ENCODE measurements at regions of chr12 and their contacts with region 1.

Region 1: GRCh38 chr12:132761032-132761920 is at the start of gene ANKLE2:
- DNase-seq: peak; percentile 86
- H3K4me3 Mint-ChIP-seq: peak within 1 kb of the TSS; percentile 88
- H3K27ac Mint-ChIP-seq: peak within 1 kb of the TSS; percentile 97
- H3K4me1 Mint-ChIP-seq: peaks cover 26% of the 10 kb centered on the region
- H3K27me3 Mint-ChIP-seq: no peaks in the 10 kb centered on the region
- total RNA-seq, gene ANKLE2: 112 to 123 TPM

Region 2: DNA sequence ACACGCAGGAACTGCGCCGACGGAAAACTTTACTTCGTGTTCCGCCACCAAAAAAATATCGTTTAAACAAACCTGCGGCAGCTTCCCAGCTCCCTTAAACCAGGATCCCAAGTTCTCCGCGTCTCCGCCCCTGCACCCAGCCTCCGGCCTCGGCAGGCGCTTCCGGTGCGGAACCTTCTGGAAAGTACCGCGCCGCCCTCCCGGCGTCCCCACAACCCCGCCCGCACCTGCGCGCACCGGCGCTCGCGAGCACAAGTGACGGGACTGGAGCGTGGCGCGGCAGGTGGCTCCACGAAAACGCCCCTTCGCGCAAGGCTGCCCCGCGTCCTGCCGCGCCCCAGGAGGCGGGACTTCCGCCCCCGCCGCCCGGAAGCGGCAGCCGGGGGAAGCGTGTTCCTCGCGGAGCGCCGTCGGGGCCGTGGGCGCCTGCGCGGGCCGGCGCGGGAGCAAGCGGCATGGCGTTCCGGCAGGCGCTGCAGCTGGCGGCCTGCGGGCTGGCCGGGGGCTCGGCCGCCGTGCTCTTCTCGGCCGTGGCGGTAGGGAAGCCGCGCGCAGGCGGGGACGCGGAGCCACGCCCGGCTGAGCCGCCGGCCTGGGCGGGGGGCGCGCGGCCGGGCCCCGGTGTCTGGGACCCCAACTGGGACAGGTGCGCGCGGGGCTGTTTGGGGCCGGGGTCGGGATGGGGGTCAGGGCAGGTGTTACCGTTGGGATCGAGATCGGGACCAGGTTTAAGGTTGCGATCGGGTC is 50.7 kb before region 1 on chr12 and contains the start of gene PGAM5:
- CTCF ChIA-PET with region 1: no interaction called
- POLR2A ChIA-PET with region 1: interaction called, 12 read pairs
- intact Hi-C with region 1: loop called (anchors 1 kb)
- DNase-seq: peak; percentile 93
- H3K4me3 Mint-ChIP-seq: peak within 1 kb of the TSS; percentile 83
- H3K27ac Mint-ChIP-seq: peak within 1 kb of the TSS; percentile 86
- H3K4me1 Mint-ChIP-seq: peaks cover 23% of the 10 kb centered on the region
- H3K27me3 Mint-ChIP-seq: no peaks in the 10 kb centered on the region
- total RNA-seq, gene PGAM5: 54.3 to 56.4 TPM

Region 3: DNA sequence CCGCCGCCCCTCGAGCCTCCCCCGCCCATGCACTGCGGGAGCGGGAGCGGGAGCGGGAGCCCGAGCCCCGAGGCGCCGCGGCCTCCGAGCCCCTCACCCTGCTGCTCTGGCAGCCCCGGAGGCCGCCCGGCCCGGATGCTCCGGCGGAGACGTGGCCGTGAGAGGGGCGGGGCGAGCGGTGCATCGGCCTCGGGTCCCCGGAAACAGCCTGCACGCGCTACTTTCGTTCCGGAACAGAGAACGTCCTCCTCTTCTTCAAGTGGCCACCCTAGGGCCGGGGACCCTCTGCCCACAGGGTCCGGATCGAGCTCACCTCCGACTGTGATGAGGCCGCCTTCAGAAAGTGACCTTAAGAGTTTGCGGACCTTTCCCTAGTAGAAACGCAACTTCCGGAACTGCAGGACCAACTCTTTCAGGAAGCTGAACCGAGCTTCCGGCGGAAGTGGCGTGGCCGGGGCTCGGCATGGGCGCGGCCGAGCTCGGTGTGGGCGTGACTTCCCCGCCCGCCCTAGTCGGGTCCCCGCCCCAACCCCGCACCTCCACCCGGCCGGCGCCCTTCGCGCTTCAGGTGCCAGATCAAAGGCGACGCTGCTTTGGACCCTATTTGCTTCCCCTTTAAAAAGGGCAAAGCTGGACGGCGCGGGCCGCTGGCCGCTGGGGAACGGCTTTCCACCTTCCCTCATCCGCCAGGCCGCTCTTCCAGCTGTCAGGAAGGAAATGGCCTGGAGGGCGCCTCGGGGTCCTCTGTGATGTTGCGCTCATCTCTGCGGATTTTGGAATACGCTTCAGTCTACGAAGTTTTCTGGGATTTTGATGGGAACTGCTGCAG is 67.6 kb after region 1 on chr12 and contains the start of gene GOLGA3:
- CTCF ChIA-PET with region 1: no interaction called
- POLR2A ChIA-PET with region 1: no interaction called
- intact Hi-C with region 1: loop called (anchors 2 kb)
- DNase-seq: peak; percentile 96
- H3K4me3 Mint-ChIP-seq: peak within 1 kb of the TSS; percentile 96
- H3K27ac Mint-ChIP-seq: peak within 1 kb of the TSS; percentile 100
- H3K4me1 Mint-ChIP-seq: peaks cover 50% of the 10 kb centered on the region
- H3K27me3 Mint-ChIP-seq: no peaks in the 10 kb centered on the region
- total RNA-seq, gene GOLGA3: 41.7 to 44.2 TPM

Region 4: GRCh38 chr12:132956011-132956788 is 194.9 kb after region 1 on chr12 and contains the start of gene ZNF605:
- CTCF ChIA-PET with region 1: no interaction called
- POLR2A ChIA-PET with region 1: no interaction called
- intact Hi-C with region 1: no loop called
- DNase-seq: peak; percentile 93
- H3K4me3 Mint-ChIP-seq: peak within 1 kb of the TSS; percentile 88
- H3K27ac Mint-ChIP-seq: peak within 1 kb of the TSS; percentile 89
- H3K4me1 Mint-ChIP-seq: peaks cover 31% of the 10 kb centered on the region
- H3K27me3 Mint-ChIP-seq: no peaks in the 10 kb centered on the region
- total RNA-seq, gene ZNF605: 4.6 to 5.3 TPM

Region 5: GRCh38 chr12:132986001-132986912 is 225.0 kb after region 1 on chr12 and contains the start of gene ZNF26:
- CTCF ChIA-PET with region 1: no interaction called
- POLR2A ChIA-PET with region 1: no interaction called
- intact Hi-C with region 1: loop called (anchors 5 kb)
- DNase-seq: peak; percentile 92
- H3K4me3 Mint-ChIP-seq: peak within 1 kb of the TSS; percentile 89
- H3K27ac Mint-ChIP-seq: peak within 1 kb of the TSS; percentile 94
- H3K4me1 Mint-ChIP-seq: peaks cover 27% of the 10 kb centered on the region
- H3K27me3 Mint-ChIP-seq: no peaks in the 10 kb centered on the region
- total RNA-seq, gene ZNF26: 10.2 to 10.8 TPM

Measured in activated CD4-positive, alpha-beta memory T cell treated with anti-CD3 and anti-CD28 coated beads for 36 hours (primary cell).